ENCODE measurements at regions of chr12 and their contacts with region 1.

Region 1: GRCh38 chr12:56630160-56630632 is at the start of gene BAZ2A:
- DNase-seq: peak; percentile 92
- ATAC-seq: peak; percentile 74
- H3K4me3 Mint-ChIP-seq: peak within 1 kb of the TSS; percentile 84
- H3K27ac Mint-ChIP-seq: peak within 1 kb of the TSS; percentile 83
- H3K4me1 Mint-ChIP-seq: peaks cover 67% of the 10 kb centered on the region
- H3K27me3 Mint-ChIP-seq: no peaks in the 10 kb centered on the region
- total RNA-seq, gene BAZ2A: 92.2 to 96.0 TPM

Region 2: DNA sequence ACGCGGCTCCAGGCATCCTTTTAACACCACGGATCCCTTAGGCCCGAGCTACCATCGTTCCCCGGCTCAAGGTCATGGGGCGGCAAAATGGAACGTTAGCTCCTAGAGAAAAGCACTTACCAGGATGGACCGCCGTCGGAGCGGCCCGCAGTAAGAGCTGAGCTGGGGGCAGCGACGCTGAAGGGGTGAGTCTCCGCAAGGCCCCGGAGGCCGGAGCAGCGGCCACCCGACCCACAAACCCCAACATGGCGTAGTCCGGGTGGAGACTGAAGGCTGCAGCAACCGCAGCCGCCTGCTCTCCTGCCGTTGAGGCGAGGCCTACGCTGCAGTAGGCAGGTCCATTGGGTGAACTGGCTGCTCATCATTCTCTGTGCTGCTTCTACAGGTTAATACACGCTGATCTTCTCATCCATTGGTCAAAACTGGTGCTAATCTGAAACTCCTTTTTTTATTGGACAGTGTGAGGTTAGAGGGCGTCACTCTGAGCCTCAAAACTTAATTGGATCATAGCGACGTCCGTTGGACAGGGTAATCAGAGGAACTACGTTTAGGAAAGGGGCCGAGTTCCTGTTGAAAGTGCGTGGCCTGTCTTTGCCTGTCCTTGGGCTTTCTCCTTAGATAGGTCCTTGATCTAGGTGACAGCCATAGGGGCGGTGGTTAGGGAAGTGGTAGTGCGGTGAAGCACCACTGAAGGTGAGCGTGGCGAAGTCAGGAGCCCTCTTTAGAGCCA is 15.7 kb after region 1 on chr12 and contains the start of gene ATP5F1B:
- CTCF ChIA-PET with region 1: interaction called, 50 read pairs
- POLR2A ChIA-PET with region 1: interaction called, 49 read pairs
- DNase-seq: peak; percentile 97
- ATAC-seq: peak; percentile 99
- H3K4me3 Mint-ChIP-seq: peak within 1 kb of the TSS; percentile 98
- H3K27ac Mint-ChIP-seq: peak within 1 kb of the TSS; percentile 99
- H3K4me1 Mint-ChIP-seq: peaks cover 36% of the 10 kb centered on the region
- H3K27me3 Mint-ChIP-seq: no peaks in the 10 kb centered on the region
- total RNA-seq, gene ATP5F1B: 669 to 680 TPM

Region 3: DNA sequence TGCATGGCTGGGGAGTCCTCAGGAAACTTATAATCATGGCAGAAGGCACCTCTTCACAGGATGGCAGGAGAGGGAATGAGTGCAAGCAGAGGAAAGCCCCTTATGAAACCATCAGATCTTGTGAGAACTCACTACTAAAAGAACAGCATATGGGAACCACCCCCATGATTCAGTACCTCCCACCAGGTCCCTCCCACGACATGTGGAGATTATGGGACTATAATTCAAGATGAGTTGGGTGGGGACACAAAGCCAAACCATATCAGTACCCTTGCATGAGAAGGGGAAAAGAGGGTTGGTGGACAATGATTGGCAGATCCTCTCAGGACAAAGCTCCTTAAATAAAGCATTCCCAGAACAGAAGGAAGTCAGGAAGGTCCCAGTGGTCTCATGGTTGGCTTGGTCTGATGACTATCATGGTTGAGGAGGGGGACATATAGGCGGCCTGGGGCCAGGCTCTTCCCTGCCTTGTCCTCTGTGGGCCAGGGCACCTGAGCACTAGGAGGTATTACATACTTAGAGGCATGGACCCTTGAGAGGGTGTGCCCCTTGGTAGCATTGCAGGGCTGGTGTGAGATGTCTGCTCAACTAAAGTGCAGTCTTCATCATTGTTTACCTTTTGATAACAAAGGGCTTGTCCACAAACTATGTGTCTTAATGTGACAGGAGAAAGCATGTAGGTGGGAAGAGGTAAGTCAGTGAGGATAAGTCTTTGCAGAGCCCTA is 155.1 kb after region 1 on chr12:
- CTCF ChIA-PET with region 1: no interaction called
- POLR2A ChIA-PET with region 1: no interaction called
- DNase-seq: no peak
- ATAC-seq: no peak
- H3K4me3 Mint-ChIP-seq: no peak overlapping the region
- H3K27ac Mint-ChIP-seq: no peak overlapping the region
- H3K4me1 Mint-ChIP-seq: no peaks in the 10 kb centered on the region
- H3K27me3 Mint-ChIP-seq: no peaks in the 10 kb centered on the region

Region 4: DNA sequence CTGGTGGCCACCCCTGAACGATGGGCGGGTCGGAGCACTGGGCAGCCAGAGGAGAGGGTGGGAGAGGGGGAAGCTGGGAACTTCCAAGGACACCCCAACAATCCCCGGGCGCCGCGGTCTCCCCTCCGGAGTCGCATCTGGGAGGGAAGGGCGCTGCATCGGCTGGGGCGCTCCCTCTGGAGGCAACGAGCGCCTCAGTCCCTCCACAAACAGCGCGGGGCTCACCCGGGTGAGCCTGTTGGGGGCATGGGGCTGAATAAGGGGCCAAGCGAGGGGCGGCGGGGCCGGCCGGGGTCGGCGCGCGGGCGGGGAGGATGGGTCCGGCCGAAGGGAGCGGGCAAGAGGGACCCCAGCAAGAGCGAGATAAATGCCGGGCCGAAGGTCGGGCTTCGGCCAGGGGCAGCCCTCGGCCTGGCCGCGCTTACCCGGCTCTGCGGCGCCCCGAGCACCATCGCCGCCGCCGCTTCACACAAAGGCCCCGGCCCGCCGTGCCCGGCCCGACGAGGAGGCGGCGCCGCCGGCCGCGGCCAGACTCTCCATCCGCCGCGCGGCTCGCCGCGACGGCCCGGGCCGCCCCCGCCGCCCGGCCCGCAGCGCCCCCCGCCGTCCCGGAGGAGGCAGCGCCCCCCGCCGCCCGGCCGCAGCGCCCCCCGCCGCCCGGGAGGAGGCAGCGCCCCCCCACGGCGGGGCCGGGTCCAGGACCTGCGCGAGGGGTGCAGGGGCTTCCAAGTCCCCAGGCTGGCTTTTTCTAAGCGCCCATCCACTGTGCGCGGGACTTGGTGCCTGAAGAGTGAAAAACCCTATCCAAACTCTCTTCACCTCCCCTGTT is 376.0 kb after region 1 on chr12 and contains the start of gene ZBTB39:
- CTCF ChIA-PET with region 1: no interaction called
- POLR2A ChIA-PET with region 1: no interaction called
- DNase-seq: peak; percentile 68
- ATAC-seq: peak; percentile 79
- H3K4me3 Mint-ChIP-seq: peak within 1 kb of the TSS; percentile 95
- H3K27ac Mint-ChIP-seq: peak within 1 kb of the TSS; percentile 83
- H3K4me1 Mint-ChIP-seq: peaks cover 60% of the 10 kb centered on the region
- H3K27me3 Mint-ChIP-seq: no peaks in the 10 kb centered on the region
- total RNA-seq, gene ZBTB39: 7.7 to 8.2 TPM

Measured in activated CD8-positive, alpha-beta T cell treated with anti-CD3 and anti-CD28 coated beads, Interleukin-2, amount 10 ng/mL, durations not matched to agents 7 days and 5 days (primary cell).